ENCODE measurements at regions of chr2 and their contacts with region 1.

Region 1: DNA sequence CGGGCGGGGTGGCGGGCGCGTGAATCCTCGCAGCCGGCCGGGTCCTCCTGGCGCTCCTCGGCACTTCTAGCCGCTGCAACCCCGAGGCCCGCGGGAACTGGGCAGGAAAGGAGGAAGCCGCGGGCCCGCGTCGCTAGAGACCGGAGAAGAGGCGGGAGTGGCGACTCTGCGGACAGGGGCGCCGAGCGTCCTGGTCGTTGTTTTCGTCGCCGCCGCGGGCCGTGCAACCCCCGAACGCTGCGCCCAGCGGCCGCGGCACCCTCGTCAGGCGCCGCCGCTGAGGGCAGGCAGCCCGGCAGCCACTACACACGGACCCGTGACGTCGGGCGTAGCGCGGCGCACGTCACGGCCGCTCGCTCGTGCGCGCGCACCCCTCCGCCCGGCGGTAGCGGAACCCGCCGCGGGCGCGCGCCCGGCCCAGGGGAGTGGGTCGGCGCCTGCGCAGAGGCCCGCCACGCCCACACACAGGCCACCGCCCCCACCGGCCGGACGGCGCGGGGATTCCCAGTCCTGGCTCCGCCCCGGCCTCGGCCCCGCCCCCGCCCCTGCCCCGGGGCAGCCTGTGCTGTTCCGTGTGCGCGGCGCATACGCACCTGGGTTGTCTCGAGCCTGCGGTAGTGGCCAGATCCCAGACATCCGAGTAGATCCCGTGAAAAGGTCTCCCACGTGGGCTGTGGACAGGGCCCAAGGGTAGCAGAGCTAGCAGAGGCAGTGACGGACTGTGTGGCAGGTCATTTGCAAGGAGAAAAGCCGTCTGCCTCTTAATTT is at the start of gene MAP3K2:
- DNase-seq: peak; percentile 97
- ATAC-seq: peak; percentile 74
- H3K4me3 ChIP-seq: peak within 1 kb of the TSS; percentile 73 to 95 (median 80)
- H3K4me3 Mint-ChIP-seq: peak within 1 kb of the TSS; percentile 92
- H3K27ac ChIP-seq: peak within 1 kb of the TSS; percentile 97 to 99
- H3K27ac Mint-ChIP-seq: peak within 1 kb of the TSS; percentile 99
- H3K4me1 ChIP-seq: peaks cover 50 to 57% of the 10 kb centered on the region in 2 donors
- H3K4me1 Mint-ChIP-seq: peaks cover 80% of the 10 kb centered on the region
- H3K27me3 ChIP-seq: no peaks in the 10 kb centered on the region
- H3K27me3 Mint-ChIP-seq: no peaks in the 10 kb centered on the region
- CTCF ChIP-seq: no peak
- total RNA-seq, gene MAP3K2: 112 and 118 TPM in 2 replicates

Region 2: DNA sequence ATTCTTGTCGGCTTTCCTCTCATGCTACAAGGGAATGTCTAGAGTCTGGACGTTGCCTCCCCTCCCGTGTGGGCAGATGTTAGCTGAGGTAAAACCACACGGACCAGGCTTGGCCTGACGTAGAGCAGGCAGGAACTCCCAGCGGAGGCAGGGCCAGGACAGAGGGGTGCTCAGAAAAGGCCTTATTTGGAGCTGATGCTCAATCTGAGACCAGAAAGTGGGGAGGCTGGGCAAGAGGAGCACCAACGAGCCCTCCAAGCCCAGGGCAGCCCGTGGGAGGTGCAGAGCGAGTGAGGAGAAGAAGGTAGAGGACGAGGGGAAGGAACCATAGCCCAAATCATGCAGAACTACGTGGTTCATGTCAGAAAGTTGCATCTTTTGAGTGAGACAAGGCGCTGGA is 480.2 kb before region 1 on chr2:
- CTCF ChIA-PET with region 1: no interaction called
- POLR2A ChIA-PET with region 1: no interaction called
- intact Hi-C with region 1: no loop called
- DNase-seq: no peak
- ATAC-seq: no peak
- H3K4me3 ChIP-seq: no peak overlapping the region
- H3K4me3 Mint-ChIP-seq: no peak overlapping the region
- H3K27ac ChIP-seq: no peak overlapping the region
- H3K27ac Mint-ChIP-seq: no peak overlapping the region
- H3K4me1 ChIP-seq: peaks cover 7 to 10% of the 10 kb centered on the region in 2 donors
- H3K4me1 Mint-ChIP-seq: peaks cover 17% of the 10 kb centered on the region
- H3K27me3 ChIP-seq: peaks cover 0 to under 1% (median 0%) of the 10 kb centered on the region in 4 experiments
- H3K27me3 Mint-ChIP-seq: peaks cover 30% of the 10 kb centered on the region
- CTCF ChIP-seq: no peak

Region 3: GRCh38 chr2:127086990-127087790 is 300.6 kb before region 1 on chr2:
- CTCF ChIA-PET with region 1: no interaction called
- POLR2A ChIA-PET with region 1: no interaction called
- intact Hi-C with region 1: loop called (anchors 10 kb)
- DNase-seq: peak; percentile 76
- ATAC-seq: peak; percentile 1
- H3K4me3 ChIP-seq: peak overlapping the region in 4 of 5 experiments; percentile 23 to 72 (median 44)
- H3K4me3 Mint-ChIP-seq: peak overlapping the region; percentile 81
- H3K27ac ChIP-seq: peak overlapping the region; percentile 42 to 55
- H3K27ac Mint-ChIP-seq: peak overlapping the region; percentile 90
- H3K4me1 ChIP-seq: peaks cover 53 to 62% of the 10 kb centered on the region in 2 donors
- H3K4me1 Mint-ChIP-seq: peaks cover 61% of the 10 kb centered on the region
- H3K27me3 ChIP-seq: no peaks in the 10 kb centered on the region
- H3K27me3 Mint-ChIP-seq: no peaks in the 10 kb centered on the region
- CTCF ChIP-seq: no peak

Region 4: DNA sequence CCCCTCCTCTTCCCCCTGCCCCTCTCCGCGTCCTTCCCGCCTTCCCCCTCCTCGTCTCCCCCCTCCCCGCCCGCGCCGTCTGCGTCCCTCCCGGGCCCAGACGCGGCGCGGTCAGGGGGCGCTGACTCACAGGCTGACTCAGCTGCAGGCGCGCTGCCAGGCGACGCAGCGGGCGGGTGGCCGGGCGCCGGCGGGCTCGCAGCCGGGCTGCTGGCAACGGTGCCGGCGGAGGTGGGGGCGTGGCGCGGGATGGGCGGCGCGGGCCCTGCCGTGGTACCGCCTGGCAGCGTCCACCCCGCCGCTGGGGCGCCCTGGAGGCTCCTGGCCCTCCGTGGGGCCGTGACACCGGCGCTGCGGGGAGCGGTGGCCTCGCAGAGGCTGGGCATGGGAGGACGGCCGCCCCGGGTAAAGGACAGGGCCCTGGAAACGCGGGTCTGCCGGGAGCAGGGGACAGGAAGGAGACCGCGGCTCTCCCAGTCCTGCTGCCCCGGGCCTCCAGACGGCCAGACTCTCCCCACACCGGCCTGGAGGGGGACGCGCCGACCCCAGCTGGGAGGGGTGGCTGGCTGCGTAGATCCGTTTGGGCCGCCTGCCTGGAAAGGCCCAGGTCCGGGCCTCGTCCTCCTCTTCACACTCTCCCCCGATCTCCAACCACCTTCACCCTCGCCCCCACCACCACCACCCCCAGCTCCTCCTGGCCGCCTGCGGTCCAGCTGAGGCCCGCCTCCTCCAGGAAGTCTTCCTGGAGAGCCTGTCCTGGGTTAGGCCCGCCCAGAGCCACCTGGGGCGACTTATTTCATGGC is 20.4 kb after region 1 on chr2:
- CTCF ChIA-PET with region 1: interaction called, 6 read pairs
- POLR2A ChIA-PET with region 1: interaction called, 6 read pairs
- intact Hi-C with region 1: loop called (anchors 1 kb)
- DNase-seq: peak; percentile 73
- ATAC-seq: peak; percentile 92
- H3K4me3 ChIP-seq: peak overlapping the region in 4 of 5 experiments; percentile 33 to 62 (median 52)
- H3K4me3 Mint-ChIP-seq: peak overlapping the region; percentile 72
- H3K27ac ChIP-seq: no peak overlapping the region
- H3K27ac Mint-ChIP-seq: peak overlapping the region; percentile 2
- H3K4me1 ChIP-seq: peaks cover 31 to 41% of the 10 kb centered on the region in 2 donors
- H3K4me1 Mint-ChIP-seq: peaks cover 48% of the 10 kb centered on the region
- H3K27me3 ChIP-seq: no peaks in the 10 kb centered on the region
- H3K27me3 Mint-ChIP-seq: no peaks in the 10 kb centered on the region
- CTCF ChIP-seq: no peak

Region 5: DNA sequence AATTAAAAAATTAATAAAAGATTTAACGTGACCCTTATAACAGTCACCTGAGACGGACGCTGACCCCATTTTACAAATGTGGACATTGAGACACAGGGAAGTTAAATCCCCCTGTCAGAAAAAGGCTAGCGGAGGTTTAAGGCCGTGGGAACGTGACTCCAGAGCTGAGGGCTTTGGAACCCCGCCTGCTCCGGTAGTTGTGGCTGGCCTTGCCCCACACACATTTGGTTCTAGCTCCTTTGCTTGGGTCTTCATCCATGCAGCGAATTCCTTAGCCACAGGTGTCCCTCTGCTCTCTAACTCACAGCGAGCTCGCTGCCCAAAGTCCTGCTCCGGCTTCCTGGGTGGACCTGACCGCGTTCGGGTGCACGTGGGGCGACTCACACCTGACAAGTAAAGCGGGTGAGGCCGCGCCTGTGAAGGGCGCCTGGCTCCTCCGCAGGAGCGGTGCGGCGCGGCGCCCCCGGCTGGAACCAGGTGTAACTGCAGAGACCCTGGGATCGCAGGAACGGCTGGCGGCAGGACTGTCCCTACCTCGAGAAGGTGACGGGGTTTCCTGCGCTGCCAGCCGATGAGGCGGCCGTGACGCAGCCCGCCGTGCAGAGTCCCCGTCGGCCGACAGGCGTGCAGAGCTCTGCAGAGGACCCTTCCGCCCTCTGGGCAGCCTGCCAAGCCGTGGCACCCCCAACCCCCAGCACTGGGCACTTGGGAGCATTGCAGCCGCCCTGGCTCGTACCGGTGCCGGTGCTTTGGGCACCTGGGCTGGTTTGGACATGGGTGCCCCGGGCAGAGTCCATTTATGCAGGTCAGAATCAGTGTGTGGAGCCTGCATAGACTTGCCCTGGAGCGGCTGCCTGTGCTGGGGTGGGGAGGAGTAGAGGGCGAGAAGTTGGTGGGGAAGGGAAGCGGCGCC is 28.0 kb after region 1 on chr2:
- CTCF ChIA-PET with region 1: interaction called, 22 read pairs
- POLR2A ChIA-PET with region 1: interaction called, 5 read pairs
- intact Hi-C with region 1: loop called (anchors 1 kb)
- DNase-seq: peak; percentile 88
- ATAC-seq: peak; percentile 89
- H3K4me3 ChIP-seq: peak overlapping the region; percentile 51 to 72 (median 60)
- H3K4me3 Mint-ChIP-seq: peak overlapping the region; percentile 88
- H3K27ac ChIP-seq: no peak overlapping the region
- H3K27ac Mint-ChIP-seq: peak overlapping the region; percentile 65
- H3K4me1 ChIP-seq: peaks cover 31 to 37% of the 10 kb centered on the region in 2 donors
- H3K4me1 Mint-ChIP-seq: peaks cover 52% of the 10 kb centered on the region
- H3K27me3 ChIP-seq: no peaks in the 10 kb centered on the region
- H3K27me3 Mint-ChIP-seq: no peaks in the 10 kb centered on the region
- CTCF ChIP-seq: peak; percentile 90

Region 6: GRCh38 chr2:127901339-127902056 is 513.7 kb after region 1 on chr2:
- CTCF ChIA-PET with region 1: no interaction called
- POLR2A ChIA-PET with region 1: no interaction called
- intact Hi-C with region 1: no loop called
- DNase-seq: no peak
- ATAC-seq: no peak
- H3K4me3 ChIP-seq: no peak overlapping the region
- H3K4me3 Mint-ChIP-seq: no peak overlapping the region
- H3K27ac ChIP-seq: no peak overlapping the region
- H3K27ac Mint-ChIP-seq: no peak overlapping the region
- H3K4me1 ChIP-seq: peaks cover 21 to 22% of the 10 kb centered on the region in 2 donors
- H3K4me1 Mint-ChIP-seq: peaks cover 20% of the 10 kb centered on the region
- H3K27me3 ChIP-seq: no peaks in the 10 kb centered on the region
- H3K27me3 Mint-ChIP-seq: no peaks in the 10 kb centered on the region
- CTCF ChIP-seq: no peak

Measured in B cell (primary cell).